PC-9 (cell line): ENCODE measurements at regions of chr5 and their contacts with region 1.

Region 1: GRCh38 chr5:55800924-55801323 is 50.2 kb upstream of the IL31RA start:
- DNase-seq: no peak
- H3K4me3 ChIP-seq: no peak overlapping the region
- H3K27ac ChIP-seq: no peak overlapping the region
- H3K4me1 ChIP-seq: no peaks in the 10 kb centered on the region
- H3K27me3 ChIP-seq: no peaks in the 10 kb centered on the region
- CTCF ChIP-seq: no peak

Region 2: GRCh38 chr5:55758231-55758630 is 42.7 kb before region 1 on chr5:
- CTCF ChIA-PET with region 1: no interaction called
- POLR2A ChIA-PET with region 1: no interaction called
- intact Hi-C with region 1: loop called (anchors 5 kb)
- DNase-seq: peak in 1 of 2 experiments; percentile 40
- H3K4me3 ChIP-seq: no peak overlapping the region
- H3K27ac ChIP-seq: no peak overlapping the region
- H3K4me1 ChIP-seq: no peaks in the 10 kb centered on the region; the same call in 1 of the 2 replicates
- H3K27me3 ChIP-seq: no peaks in the 10 kb centered on the region
- CTCF ChIP-seq: no peak

Region 3: GRCh38 chr5:55850839-55851674 is 50.1 kb after region 1 on chr5 and contains the start of gene IL31RA:
- CTCF ChIA-PET with region 1: no interaction called
- POLR2A ChIA-PET with region 1: no interaction called
- intact Hi-C with region 1: no loop called
- DNase-seq: peak; percentile 37 to 64
- H3K4me3 ChIP-seq: no peak within 1 kb of the TSS
- H3K27ac ChIP-seq: no peak within 1 kb of the TSS
- H3K4me1 ChIP-seq: peaks cover 8% of the 10 kb centered on the region; the same call in 1 of the 2 replicates
- H3K27me3 ChIP-seq: no peaks in the 10 kb centered on the region
- CTCF ChIP-seq: no peak
- total RNA-seq, gene IL31RA: 2.0 TPM in 2 replicates